Prostate gland (tissue), 2 donors: ENCODE measurements at regions of chr17 and their contacts with region 1.

Region 1: DNA sequence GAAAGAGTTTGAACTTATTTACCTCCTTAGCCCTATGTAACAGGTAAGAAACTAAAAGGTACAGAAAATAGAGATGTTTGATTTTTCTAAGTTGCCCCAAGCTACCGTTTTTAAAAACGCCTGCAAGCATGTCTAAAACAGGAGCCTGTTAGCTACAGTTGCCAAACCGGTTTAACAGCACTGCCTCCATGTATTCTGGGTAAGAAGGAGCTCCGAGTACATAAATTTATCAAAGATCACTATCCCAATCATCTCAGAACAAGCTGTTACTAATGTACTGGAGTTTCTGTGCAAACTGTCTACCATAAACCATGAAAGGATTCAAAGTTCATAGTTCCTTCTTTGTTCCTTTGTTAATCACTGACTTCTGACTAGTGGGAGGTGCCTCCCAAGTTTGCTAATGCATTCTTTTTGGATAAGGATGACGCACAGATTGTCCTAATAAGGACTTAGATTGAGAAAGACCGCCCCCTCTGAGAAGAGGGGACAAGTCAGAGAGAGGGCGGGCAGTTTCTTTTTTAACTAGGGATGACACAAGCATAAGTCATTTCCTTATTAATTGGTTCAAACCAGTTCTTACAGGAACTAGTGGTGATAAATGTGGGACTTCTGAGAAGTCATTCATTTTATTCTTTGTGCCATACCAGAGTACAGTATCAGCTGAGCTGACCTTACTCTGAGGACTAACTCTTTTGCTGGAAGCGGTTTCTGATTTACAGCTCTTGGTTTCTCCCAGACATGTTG is 55.3 kb downstream of the TUBD1 start:
- DNase-seq: peak; percentile 92
- H3K4me3 ChIP-seq: peak overlapping the region; percentile 46 to 67
- H3K27ac ChIP-seq: peak overlapping the region; percentile 96 to 99
- H3K4me1 ChIP-seq: no peaks in the 10 kb centered on the region
- H3K27me3 ChIP-seq: no peaks in the 10 kb centered on the region
- CTCF ChIP-seq: peak in 2 of 4 experiments; percentile 6 to 26
- POLR2A ChIP-seq: peak; percentile 82

Region 2: DNA sequence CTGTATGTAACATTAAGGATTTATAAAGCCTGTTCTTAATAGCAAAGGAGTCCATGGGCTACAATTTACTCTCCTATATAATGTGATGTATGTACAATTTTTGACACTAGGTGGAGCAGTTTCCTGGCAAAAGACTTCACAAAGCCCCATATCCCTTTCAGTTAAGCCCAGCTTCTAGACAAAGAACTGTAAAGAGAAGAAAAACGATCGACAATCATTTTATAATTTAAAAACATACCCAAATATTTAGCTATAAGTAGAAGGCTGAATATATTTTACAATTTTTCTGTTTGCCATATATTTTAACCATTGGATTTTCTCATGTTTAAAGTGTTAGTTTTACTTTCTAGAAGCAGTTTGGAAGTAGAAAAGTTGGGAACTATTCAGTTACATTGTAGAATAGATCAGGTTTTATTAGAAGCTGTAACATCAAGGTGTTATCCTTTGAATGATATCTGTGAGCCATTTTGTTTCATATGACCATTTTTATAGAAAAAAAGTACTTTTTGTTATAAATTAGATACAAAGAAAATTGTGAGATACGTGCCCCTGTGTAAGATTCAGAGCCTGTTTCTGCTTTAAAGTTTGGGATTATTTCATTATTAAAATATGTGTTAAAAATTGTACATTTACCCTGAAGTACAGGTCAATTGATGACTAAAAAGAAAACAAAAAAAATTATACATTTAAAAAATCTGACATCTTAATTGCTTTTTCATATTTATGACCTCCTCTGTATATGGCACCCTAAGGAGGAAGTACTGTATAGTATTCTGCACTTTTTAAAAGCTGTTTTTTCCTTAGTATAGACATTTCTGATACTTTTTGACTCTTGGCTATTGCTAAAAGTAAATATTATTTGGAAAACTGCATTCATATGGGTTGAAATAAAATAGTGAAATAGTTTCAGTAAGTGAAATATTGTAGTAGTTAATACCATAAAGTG is 83.7 kb before region 1 on chr17:
- intact Hi-C with region 1: loop called (anchors 5 kb)
- DNase-seq: peak; percentile 72
- H3K4me3 ChIP-seq: no peak overlapping the region
- H3K27ac ChIP-seq: peak overlapping the region; percentile 43 to 73
- H3K4me1 ChIP-seq: no peaks in the 10 kb centered on the region
- H3K27me3 ChIP-seq: no peaks in the 10 kb centered on the region
- CTCF ChIP-seq: peak; percentile 15 to 91 (median 84)
- POLR2A ChIP-seq: no peak